Lower leg skin (tissue), 4 donors: ENCODE measurements at regions of chr4 and their contacts with region 1.

Region 1: DNA sequence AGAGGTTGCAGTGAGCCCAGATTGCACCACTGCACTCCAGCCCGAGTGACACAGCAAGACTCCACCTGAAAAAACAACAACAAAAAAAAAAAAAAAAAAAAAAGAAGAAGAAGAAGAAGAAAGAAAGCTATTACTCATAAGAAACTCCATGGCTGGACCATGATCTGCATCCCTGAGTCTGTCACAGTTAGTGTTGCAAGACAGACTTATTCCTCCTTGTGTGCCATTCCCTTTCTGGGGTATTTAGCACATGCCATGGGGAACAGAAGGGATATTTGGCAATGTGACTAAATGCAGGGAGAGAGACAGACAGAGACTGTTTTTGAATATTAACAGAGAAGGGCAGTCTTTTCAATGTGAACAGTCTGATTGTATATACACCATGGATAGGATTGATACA is 16.7 kb upstream of the PDS5A start:
- DNase-seq: no peak
- H3K4me3 ChIP-seq: no peak overlapping the region
- CTCF ChIP-seq: no peak
- POLR2A ChIP-seq: no peak

Region 2: DNA sequence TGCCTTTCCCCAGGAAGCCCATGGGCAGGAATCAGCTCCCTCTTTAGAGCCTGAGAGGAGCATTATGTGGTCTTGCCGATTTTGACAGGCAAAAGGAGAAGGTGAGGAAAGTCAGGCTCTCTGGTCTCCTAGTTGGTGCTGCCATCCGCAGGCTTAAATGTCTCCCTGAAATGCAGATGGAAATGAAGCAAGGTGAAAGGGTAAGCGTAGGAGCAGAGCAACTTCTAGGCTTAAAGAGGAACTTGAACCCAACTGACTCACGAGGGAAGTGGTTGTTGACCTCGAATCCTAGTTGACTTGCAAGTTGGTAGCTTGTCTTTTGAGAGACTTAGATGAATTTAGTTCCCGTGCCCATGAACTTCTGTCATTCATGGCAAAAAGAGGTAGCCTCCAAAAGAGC is 1828.3 kb before region 1 on chr4:
- intact Hi-C with region 1: no loop called
- DNase-seq: no peak
- H3K4me3 ChIP-seq: no peak overlapping the region
- CTCF ChIP-seq: no peak
- POLR2A ChIP-seq: no peak

Region 3: GRCh38 chr4:40032785-40033184 is 38.4 kb after region 1 on chr4:
- intact Hi-C with region 1: loop called (anchors 2 kb)
- DNase-seq: no peak
- H3K4me3 ChIP-seq: no peak overlapping the region
- CTCF ChIP-seq: no peak
- POLR2A ChIP-seq: no peak